MCF 10A (cell line): ENCODE measurements at regions of chr3 and their contacts with region 1.

Region 1: DNA sequence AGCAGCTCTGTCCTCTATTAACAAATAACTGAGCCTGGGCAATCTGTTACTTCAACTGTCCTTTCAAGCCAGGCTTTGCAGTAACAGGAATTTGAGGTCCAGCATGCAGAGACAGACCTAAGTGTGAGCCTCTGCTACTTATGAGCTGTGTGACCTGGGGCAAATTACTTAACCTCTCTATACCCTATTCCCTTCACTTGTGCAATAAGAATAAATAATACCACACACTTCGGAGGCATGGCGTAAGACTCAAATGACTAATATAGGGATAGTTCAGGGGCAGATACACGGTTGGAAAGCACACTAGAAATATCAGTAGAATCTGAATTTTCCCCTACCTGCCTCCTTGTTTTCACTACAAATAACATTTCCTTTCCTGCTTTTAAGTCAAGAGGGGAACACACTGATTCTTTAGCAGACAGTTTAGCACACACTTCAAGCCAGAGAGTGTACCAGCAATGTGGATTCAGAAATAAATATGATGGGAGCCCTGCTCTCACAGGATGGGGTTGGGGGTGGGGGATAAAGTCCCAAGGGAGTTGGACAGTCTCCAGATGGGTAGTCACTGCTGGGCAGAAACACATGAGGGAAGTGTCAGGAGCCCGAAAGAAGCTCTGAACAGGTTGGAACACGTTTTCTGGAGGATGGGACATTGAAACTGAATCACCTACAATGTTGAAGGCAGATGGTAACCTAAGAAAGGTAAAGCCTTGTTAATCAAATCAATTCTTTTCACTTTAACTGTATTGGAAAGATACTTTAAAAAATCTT is 61.8 kb upstream of the RBP1 start:
- DNase-seq: peak; percentile 94
- H3K4me3 Mint-ChIP-seq: peak overlapping the region; percentile 61
- H3K27ac Mint-ChIP-seq: peak overlapping the region; percentile 84
- H3K4me1 Mint-ChIP-seq: peaks cover 32% of the 10 kb centered on the region
- H3K27me3 Mint-ChIP-seq: no peaks in the 10 kb centered on the region
- CTCF ChIP-seq: no peak

Region 2: GRCh38 chr3:139533781-139534443 is 67.5 kb before region 1 on chr3:
- CTCF ChIA-PET with region 1: interaction called, 3 read pairs
- POLR2A ChIA-PET with region 1: interaction called, 5 read pairs
- intact Hi-C with region 1: loop called (anchors 1 kb)
- DNase-seq: peak; percentile 27
- H3K4me3 Mint-ChIP-seq: no peak overlapping the region
- H3K27ac Mint-ChIP-seq: peak overlapping the region; percentile 86
- H3K4me1 Mint-ChIP-seq: peaks cover 30% of the 10 kb centered on the region
- H3K27me3 Mint-ChIP-seq: no peaks in the 10 kb centered on the region
- CTCF ChIP-seq: no peak